ENCODE measurements at regions of chr11 and their contacts with region 1.

Region 1: DNA sequence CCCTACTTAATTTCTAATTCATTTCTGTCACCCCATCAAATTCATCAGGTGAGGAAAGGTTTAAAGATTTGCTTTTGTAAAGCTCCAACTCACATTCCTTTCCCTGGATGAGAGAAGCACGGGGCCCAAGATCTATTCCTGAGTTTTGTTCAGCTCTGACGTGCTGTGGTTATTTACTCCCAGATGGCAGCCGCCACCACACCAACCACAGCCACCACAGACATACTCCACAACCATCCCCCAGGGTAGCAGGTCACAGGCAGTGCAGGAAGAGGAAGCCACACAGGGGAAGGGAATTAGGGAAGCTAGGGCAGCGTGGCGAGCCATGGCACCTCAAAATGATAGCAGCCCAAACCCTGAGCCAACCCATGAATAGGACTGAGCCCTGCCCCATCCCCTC is 63.5 kb upstream of the CSNK2A3 start:
- DNase-seq: no peak
- H3K4me3 ChIP-seq: no peak overlapping the region
- H3K27ac ChIP-seq: no peak overlapping the region
- H3K4me1 ChIP-seq: no peaks in the 10 kb centered on the region
- H3K27me3 ChIP-seq: no peaks in the 10 kb centered on the region
- CTCF ChIP-seq: no peak
- POLR2A ChIP-seq: no peak

Region 2: GRCh38 chr11:11618973-11619435 is 202.5 kb after region 1 on chr11:
- intact Hi-C with region 1: loop called (anchors 10 kb)
- DNase-seq: no peak
- H3K4me3 ChIP-seq: no peak overlapping the region
- H3K27ac ChIP-seq: no peak overlapping the region
- H3K4me1 ChIP-seq: peaks cover 42% of the 10 kb centered on the region
- H3K27me3 ChIP-seq: no peaks in the 10 kb centered on the region
- CTCF ChIP-seq: no peak
- POLR2A ChIP-seq: no peak

Region 3: DNA sequence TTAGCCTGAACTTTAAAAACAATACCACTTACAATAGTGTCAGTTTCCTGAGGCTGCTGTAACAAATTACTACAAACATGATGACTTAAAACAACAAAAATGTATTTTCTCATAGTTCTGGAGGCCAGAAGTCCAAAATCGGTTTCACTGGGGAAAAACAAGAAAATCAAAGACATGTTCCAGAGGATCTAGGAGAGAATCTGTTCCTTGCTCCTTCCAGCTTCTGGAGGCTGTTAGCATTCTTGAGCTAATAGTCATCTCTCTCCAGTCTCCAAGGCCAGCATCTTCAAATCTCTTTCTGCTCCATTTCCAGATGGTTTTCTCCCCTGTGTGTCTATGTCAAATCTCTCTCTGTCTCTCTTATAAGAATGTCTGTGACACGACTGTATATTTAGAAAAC is 1190.1 kb after region 1 on chr11:
- intact Hi-C with region 1: no loop called
- DNase-seq: no peak
- H3K4me3 ChIP-seq: no peak overlapping the region
- H3K27ac ChIP-seq: no peak overlapping the region
- H3K4me1 ChIP-seq: no peaks in the 10 kb centered on the region
- H3K27me3 ChIP-seq: no peaks in the 10 kb centered on the region
- CTCF ChIP-seq: no peak
- POLR2A ChIP-seq: no peak

Measured in vagina (tissue), 2 donors.